ENCODE measurements at regions of chr10 and their contacts with region 1.

Region 1: DNA sequence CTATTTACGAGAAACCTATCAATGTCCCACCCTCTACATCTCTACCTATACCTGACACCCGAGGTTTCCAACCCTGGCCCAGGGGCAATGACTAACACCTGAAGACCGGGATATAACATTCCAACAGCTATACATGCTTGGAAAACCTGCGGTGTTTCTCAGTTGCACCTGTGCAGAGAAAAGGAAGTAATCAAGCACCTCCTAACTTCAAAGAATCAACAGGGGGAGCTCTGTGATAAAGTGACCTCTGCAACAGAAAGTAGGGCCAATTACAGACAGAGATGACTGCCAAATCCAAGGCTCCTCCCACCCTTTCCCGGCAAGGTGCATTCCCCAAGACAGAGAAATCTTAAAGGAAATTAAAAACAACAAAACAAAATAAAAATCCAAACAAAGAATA is 41.3 kb downstream of the CCDC6 start:
- DNase-seq: peak; percentile 33
- ATAC-seq: peak; percentile 81

Region 2: GRCh38 chr10:59817773-59818172 is 47.3 kb before region 1 on chr10:
- intact Hi-C with region 1: no loop called
- DNase-seq: peak; percentile 52
- ATAC-seq: peak; percentile 15 to 75

Region 3: GRCh38 chr10:59906417-59907202 is 41.5 kb after region 1 on chr10 and contains the start of gene CCDC6:
- intact Hi-C with region 1: loop called in 1 of 2 experiments (anchors 5 kb)
- DNase-seq: peak; percentile 96
- ATAC-seq: peak; percentile 96
- total RNA-seq, gene CCDC6: 21.0 to 24.3 TPM

Region 4: DNA sequence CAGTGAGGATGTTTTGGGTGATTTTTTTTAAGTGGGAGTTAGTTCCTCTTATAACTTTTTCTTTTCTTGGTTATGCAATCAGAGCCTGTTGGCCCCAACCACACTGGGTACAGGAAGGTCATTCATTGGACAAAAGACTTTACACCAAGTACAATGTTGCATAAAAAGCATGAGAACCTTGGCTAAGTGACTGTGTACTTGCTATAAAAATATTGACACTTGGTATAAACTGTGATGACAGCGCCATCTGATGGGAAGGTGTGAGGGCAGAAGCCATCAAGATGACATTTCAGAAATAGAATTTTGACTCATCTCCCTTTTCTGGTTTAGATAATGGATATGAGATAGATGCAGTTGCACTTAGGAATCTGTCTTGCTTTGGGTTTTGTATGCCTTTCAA is 167.6 kb after region 1 on chr10:
- intact Hi-C with region 1: loop called in 1 of 2 experiments (anchors 10 kb)
- DNase-seq: peak; percentile 28
- ATAC-seq: peak; percentile 91 to 92

Measured in left cardiac atrium (tissue), 4 donors.